Activated CD4-positive, alpha-beta T cell treated with anti-CD3 and anti-CD28 coated beads for 36 hours (primary cell): ENCODE measurements at regions of chr16 and their contacts with region 1.

Region 1: DNA sequence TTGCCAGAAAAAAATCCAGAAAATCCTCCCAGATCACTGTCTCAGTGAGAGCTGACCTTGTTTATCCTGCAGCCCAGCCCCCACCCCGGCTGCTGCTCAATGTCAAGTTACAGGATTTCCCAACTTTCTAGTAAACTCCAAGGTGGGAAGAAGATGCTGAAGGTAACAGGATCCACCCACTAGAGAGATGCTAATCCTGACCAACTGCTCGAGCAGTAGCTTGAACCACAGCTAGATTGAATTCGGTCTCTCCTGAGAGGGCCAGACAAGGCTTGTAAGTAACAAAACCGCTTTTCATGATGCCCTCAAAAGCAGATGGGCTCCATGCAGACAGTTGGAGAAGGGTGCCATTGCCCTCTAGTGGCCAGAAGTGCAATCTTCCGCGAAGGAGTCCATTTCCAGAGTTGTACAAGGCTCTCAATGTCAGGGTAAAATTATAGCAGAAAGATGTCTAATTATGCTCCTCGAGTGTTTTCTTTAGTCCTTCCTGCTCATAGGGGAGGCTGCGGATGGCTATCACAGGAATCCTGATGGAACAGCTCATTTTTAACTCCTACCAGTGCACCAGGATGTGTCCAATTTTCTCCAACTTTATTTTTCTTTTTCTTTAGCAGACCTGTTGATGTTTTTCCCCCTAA is 3.9 kb downstream of the CDH11 start:
- DNase-seq: peak; percentile 65
- ATAC-seq: peak; percentile 30
- H3K4me3 Mint-ChIP-seq: no peak overlapping the region
- H3K27ac Mint-ChIP-seq: no peak overlapping the region
- H3K4me1 Mint-ChIP-seq: no peaks in the 10 kb centered on the region
- H3K27me3 Mint-ChIP-seq: peaks cover 23% of the 10 kb centered on the region

Region 2: GRCh38 chr16:63361032-63361624 is 1756.8 kb before region 1 on chr16:
- CTCF ChIA-PET with region 1: no interaction called
- POLR2A ChIA-PET with region 1: no interaction called
- intact Hi-C with region 1: loop called (anchors 1 to 5 kb)
- DNase-seq: peak; percentile 3
- ATAC-seq: no peak
- H3K4me3 Mint-ChIP-seq: no peak overlapping the region
- H3K27ac Mint-ChIP-seq: no peak overlapping the region
- H3K4me1 Mint-ChIP-seq: no peaks in the 10 kb centered on the region
- H3K27me3 Mint-ChIP-seq: no peaks in the 10 kb centered on the region

Region 3: GRCh38 chr16:64089697-64090096 is 1028.2 kb before region 1 on chr16:
- CTCF ChIA-PET with region 1: no interaction called
- POLR2A ChIA-PET with region 1: no interaction called
- intact Hi-C with region 1: loop called in 1 of 2 experiments (anchors 5 kb)
- DNase-seq: no peak
- ATAC-seq: no peak
- H3K4me3 Mint-ChIP-seq: no peak overlapping the region
- H3K27ac Mint-ChIP-seq: no peak overlapping the region
- H3K4me1 Mint-ChIP-seq: no peaks in the 10 kb centered on the region
- H3K27me3 Mint-ChIP-seq: no peaks in the 10 kb centered on the region

Region 4: DNA sequence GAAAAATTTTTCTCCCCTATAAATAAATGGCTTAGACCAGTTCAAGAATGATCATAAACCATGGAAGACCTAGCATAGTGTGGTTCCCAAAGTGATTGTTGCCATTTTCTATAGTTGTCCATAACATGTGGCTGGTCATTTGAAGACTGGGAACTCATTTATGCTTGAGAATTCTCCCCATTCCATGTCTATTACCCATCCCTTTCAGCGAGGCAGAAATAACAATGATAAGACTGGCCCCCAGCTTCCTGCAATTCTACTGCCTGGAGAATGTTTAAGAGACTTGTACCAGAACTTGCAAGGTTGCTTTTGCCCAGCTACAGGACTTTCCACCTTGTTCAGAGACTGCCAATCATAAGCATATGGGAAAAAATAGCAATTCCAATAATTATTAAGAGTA is 150.4 kb after region 1 on chr16:
- CTCF ChIA-PET with region 1: no interaction called
- POLR2A ChIA-PET with region 1: no interaction called
- intact Hi-C with region 1: no loop called
- DNase-seq: no peak
- ATAC-seq: no peak
- H3K4me3 Mint-ChIP-seq: no peak overlapping the region
- H3K27ac Mint-ChIP-seq: no peak overlapping the region
- H3K4me1 Mint-ChIP-seq: no peaks in the 10 kb centered on the region
- H3K27me3 Mint-ChIP-seq: no peaks in the 10 kb centered on the region

Region 5: GRCh38 chr16:66270333-66270927 is 1152.5 kb after region 1 on chr16:
- CTCF ChIA-PET with region 1: no interaction called
- POLR2A ChIA-PET with region 1: no interaction called
- intact Hi-C with region 1: loop called in 1 of 2 experiments (anchors 5 kb)
- DNase-seq: peak; percentile 82
- ATAC-seq: peak; percentile 84
- H3K4me3 Mint-ChIP-seq: no peak overlapping the region
- H3K27ac Mint-ChIP-seq: no peak overlapping the region
- H3K4me1 Mint-ChIP-seq: peaks cover 13% of the 10 kb centered on the region
- H3K27me3 Mint-ChIP-seq: peaks cover 35% of the 10 kb centered on the region